Activated naive CD8-positive, alpha-beta T cell treated with anti-CD3 and anti-CD28 coated beads, Interleukin-2, amount 10 ng/mL, durations not matched to agents 7 days and 5 days (primary cell): ENCODE measurements at regions of chr16 and their contacts with region 1.

Region 1: GRCh38 chr16:3625911-3626732 is 14.7 kb upstream of the SLX4 start:
- DNase-seq: no peak
- ATAC-seq: peak; percentile 91
- H3K4me3 Mint-ChIP-seq: peak overlapping the region; percentile 40
- H3K27ac Mint-ChIP-seq: peak overlapping the region; percentile 89
- H3K4me1 Mint-ChIP-seq: peaks cover 30% of the 10 kb centered on the region
- H3K27me3 Mint-ChIP-seq: no peaks in the 10 kb centered on the region

Region 2: GRCh38 chr16:3611146-3611975 is 14.8 kb before region 1 on chr16 and contains the start of gene SLX4:
- POLR2A ChIA-PET with region 1: interaction called, 12 read pairs
- DNase-seq: peak; percentile 99
- ATAC-seq: peak; percentile 91
- H3K4me3 Mint-ChIP-seq: peak within 1 kb of the TSS; percentile 100
- H3K27ac Mint-ChIP-seq: peak within 1 kb of the TSS; percentile 100
- H3K4me1 Mint-ChIP-seq: peaks cover 55% of the 10 kb centered on the region
- H3K27me3 Mint-ChIP-seq: no peaks in the 10 kb centered on the region
- total RNA-seq, gene SLX4: 16.8 to 16.9 TPM

Region 3: DNA sequence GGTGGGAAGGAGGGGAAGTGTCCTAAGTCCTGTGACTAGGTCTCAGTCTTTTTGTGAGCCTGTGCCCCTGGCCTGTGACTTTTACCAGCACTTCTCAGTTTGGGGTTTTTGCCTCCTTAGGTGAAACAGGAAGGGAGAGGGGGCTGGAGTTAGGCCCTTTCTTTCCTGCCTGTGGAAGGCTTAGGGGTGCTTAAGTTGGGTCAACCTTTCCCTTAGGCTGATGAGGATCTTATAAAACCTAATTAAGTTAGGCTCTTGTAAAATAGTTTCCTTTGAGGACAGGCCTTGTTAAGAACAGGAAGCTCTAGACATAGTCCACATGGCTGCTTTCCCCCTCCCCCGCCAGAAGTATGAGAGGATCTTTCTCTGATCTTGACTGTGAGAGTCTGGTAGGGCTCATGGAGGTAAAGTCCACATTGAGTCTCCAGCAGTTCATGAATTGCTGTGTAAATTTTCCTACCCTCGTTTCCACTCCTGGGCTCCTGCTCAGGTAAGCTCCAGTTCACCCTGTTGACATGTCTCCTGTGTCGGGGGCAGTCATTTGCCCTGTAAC is 11.3 kb after region 1 on chr16:
- POLR2A ChIA-PET with region 1: interaction called, 14 read pairs
- DNase-seq: no peak
- ATAC-seq: peak; percentile 89
- H3K4me3 Mint-ChIP-seq: peak overlapping the region; percentile 47
- H3K27ac Mint-ChIP-seq: peak overlapping the region; percentile 75
- H3K4me1 Mint-ChIP-seq: peaks cover 24% of the 10 kb centered on the region
- H3K27me3 Mint-ChIP-seq: no peaks in the 10 kb centered on the region

Region 4: GRCh38 chr16:3654249-3654991 is 28.3 kb after region 1 on chr16 and contains the start of gene DNASE1:
- POLR2A ChIA-PET with region 1: no interaction called
- DNase-seq: peak; percentile 63
- ATAC-seq: peak; percentile 68
- H3K4me3 Mint-ChIP-seq: no peak within 1 kb of the TSS
- H3K27ac Mint-ChIP-seq: peak within 1 kb of the TSS; percentile 74
- H3K4me1 Mint-ChIP-seq: peaks cover 7% of the 10 kb centered on the region
- H3K27me3 Mint-ChIP-seq: no peaks in the 10 kb centered on the region
- total RNA-seq, gene DNASE1: 49.6 to 53.9 TPM